Calu3 (cell line): ENCODE measurements at regions of chr5 and their contacts with region 1.

Region 1: GRCh38 chr5:75265731-75266130 is 29.1 kb upstream of the ANKRD31 start:
- DNase-seq: no peak
- H3K4me3 Mint-ChIP-seq: no peak overlapping the region
- H3K27ac Mint-ChIP-seq: no peak overlapping the region
- H3K4me1 Mint-ChIP-seq: peaks cover 30% of the 10 kb centered on the region
- H3K27me3 Mint-ChIP-seq: no peaks in the 10 kb centered on the region
- CTCF ChIP-seq: peak; percentile 43

Region 2: GRCh38 chr5:74927336-74927735 is 338.4 kb before region 1 on chr5:
- CTCF ChIA-PET with region 1: interaction called, 7 read pairs
- intact Hi-C with region 1: loop called (anchors 1 kb)
- DNase-seq: no peak
- H3K4me3 Mint-ChIP-seq: no peak overlapping the region
- H3K27ac Mint-ChIP-seq: no peak overlapping the region
- H3K4me1 Mint-ChIP-seq: peaks cover 8% of the 10 kb centered on the region
- H3K27me3 Mint-ChIP-seq: no peaks in the 10 kb centered on the region
- CTCF ChIP-seq: no peak

Region 3: DNA sequence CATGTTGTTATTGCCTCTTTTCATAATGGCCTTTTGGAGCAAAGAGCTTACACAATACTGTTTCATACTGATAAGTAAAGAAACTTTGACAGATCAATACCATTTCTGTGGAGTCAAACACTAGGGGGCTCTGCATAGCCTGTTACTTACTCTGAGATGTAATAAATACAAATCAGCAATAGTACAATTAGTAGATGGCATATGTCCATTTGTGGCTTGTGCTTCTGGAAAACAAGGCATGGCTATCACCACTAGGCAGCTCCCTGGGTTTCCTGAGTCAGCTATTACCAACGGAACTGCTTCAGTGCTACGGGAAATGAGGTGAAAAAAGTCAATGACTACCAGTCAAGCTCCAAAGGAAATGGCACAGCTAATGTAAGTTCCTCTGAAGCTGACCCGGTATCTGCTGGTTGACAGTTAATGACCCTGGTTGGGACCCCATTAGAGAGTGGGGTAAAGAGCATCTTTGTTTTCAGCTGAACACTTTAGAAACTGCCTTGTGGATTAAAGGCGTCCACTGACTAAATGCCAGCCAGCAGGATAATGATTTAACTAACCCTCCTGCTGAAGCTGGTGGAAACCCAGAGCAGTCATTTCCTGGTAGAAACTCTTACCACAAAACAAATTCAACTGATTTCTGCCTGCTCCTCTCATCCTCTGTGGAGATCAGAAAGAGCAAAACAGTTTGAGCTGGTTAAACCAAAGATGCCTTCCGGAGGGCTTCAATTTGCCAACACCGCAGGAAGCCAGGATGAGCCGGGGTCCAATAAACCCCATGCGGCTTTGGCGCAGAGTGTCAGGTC is 330.6 kb before region 1 on chr5:
- CTCF ChIA-PET with region 1: no interaction called
- intact Hi-C with region 1: loop called (anchors 2 kb)
- DNase-seq: peak; percentile 63
- H3K4me3 Mint-ChIP-seq: peak overlapping the region; percentile 41
- H3K27ac Mint-ChIP-seq: peak overlapping the region; percentile 23
- H3K4me1 Mint-ChIP-seq: peaks cover 43% of the 10 kb centered on the region
- H3K27me3 Mint-ChIP-seq: no peaks in the 10 kb centered on the region
- CTCF ChIP-seq: peak; percentile 63

Region 4: DNA sequence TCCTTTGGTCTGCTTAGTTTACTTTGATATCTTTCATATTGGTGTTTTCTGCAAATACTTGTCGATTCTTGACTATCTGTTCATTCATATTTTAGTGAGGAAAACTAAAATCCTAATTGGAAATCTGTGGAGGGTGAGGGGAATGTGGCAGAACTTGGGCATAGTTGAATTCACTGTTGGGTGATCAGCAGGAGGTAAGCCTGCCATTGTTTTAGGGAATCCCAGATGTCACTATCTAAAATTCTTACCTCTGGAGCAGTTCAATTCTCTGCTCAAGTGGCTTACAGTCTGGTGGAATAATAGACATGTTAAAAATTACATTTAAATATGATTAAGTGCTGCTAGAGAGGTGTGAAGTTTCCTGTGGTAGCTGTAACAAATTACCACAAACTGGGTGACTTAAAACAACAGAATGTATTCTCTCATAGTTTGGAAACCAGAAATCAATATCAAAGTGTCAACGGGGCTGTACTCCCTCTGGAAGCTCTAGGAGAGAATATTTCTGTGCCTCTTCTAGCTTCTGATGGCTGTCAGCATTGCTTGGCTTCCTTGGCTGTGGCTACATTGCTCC is 123.1 kb before region 1 on chr5:
- CTCF ChIA-PET with region 1: no interaction called
- intact Hi-C with region 1: no loop called
- DNase-seq: no peak
- H3K4me3 Mint-ChIP-seq: no peak overlapping the region
- H3K27ac Mint-ChIP-seq: no peak overlapping the region
- H3K4me1 Mint-ChIP-seq: no peaks in the 10 kb centered on the region
- H3K27me3 Mint-ChIP-seq: no peaks in the 10 kb centered on the region
- CTCF ChIP-seq: no peak

Region 5: GRCh38 chr5:75156585-75156984 is 109.1 kb before region 1 on chr5:
- CTCF ChIA-PET with region 1: no interaction called
- intact Hi-C with region 1: loop called (anchors 1 kb)
- DNase-seq: peak; percentile 16
- H3K4me3 Mint-ChIP-seq: no peak overlapping the region
- H3K27ac Mint-ChIP-seq: no peak overlapping the region
- H3K4me1 Mint-ChIP-seq: peaks cover 18% of the 10 kb centered on the region
- H3K27me3 Mint-ChIP-seq: no peaks in the 10 kb centered on the region
- CTCF ChIP-seq: peak; percentile 20

Region 6: DNA sequence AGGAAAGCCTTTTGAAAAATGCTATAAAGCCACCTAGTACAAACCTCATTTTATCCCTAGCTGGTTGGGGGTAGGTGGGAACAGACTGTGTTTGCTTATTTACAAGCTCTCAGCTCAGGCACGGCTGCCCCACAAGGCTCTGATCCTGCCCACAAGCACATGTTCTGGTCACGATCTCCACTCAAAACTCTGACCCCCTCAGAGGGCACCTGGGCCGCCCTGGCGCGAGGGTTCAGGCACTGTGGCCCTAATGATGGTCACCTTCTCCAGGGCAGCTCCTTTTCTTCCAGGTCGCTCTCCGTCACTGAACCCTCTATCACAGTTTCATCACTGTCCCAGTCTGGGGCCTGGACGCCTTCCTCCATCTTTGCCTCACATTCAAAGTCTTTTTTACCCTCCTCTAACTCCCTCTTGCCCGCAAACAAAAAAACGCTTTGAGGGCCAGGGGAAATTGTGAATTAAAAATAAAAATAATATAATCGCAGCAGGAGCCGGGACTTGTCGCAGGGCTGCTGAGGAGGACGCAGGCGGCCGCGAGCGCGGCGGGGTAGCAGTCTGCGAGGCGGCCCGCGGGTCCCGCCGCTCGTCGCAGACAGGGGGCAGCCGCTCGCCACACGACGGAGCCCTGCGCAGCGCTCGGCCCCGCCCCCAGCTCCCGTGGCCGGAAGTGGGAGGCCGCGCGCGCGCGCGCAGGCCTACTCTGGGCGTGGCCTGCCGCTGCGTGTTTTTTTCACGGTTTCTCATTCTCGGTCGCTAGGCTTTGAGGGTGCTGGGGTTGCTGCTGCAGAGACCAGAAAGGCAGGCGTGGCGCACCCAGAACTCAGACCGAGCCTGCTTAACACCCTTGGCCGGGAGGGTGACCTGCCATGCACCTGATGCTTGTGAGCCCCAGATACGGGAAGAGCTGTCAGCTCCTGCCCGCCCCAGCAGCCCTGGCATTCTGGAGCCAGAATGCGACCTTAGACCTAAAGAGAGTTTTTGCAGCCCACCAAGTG is 29.1 kb before region 1 on chr5 and contains the start of gene ANKRD31:
- CTCF ChIA-PET with region 1: interaction called, 15 read pairs
- intact Hi-C with region 1: loop called (anchors 2 kb)
- DNase-seq: peak; percentile 94
- H3K4me3 Mint-ChIP-seq: peak within 1 kb of the TSS; percentile 69
- H3K27ac Mint-ChIP-seq: peak within 1 kb of the TSS; percentile 81
- H3K4me1 Mint-ChIP-seq: peaks cover 30% of the 10 kb centered on the region
- H3K27me3 Mint-ChIP-seq: no peaks in the 10 kb centered on the region
- CTCF ChIP-seq: peak; percentile 85
- total RNA-seq, gene ANKRD31: 1.5 and 1.7 TPM in 2 replicates